ENCODE measurements at regions of chr1 and their contacts with region 1.

Region 1: GRCh38 chr1:30085811-30086770 is 637.3 kb downstream of the MATN1 start:
- DNase-seq: peak; percentile 84
- H3K4me3 ChIP-seq: peak overlapping the region; percentile 20
- H3K27ac ChIP-seq: peak overlapping the region; percentile 44
- H3K4me1 ChIP-seq: peaks cover 54% of the 10 kb centered on the region
- H3K27me3 ChIP-seq: no peaks in the 10 kb centered on the region
- CTCF ChIP-seq: peak; percentile 92

Region 2: GRCh38 chr1:29513357-29513756 is 572.7 kb before region 1 on chr1:
- CTCF ChIA-PET with region 1: interaction called, 3 read pairs
- POLR2A ChIA-PET with region 1: no interaction called
- intact Hi-C with region 1: loop called (anchors 10 kb)
- DNase-seq: peak; percentile 72
- H3K4me3 ChIP-seq: no peak overlapping the region
- H3K27ac ChIP-seq: no peak overlapping the region
- H3K4me1 ChIP-seq: no peaks in the 10 kb centered on the region
- H3K27me3 ChIP-seq: peaks cover 38% of the 10 kb centered on the region
- CTCF ChIP-seq: peak; percentile 65

Region 3: DNA sequence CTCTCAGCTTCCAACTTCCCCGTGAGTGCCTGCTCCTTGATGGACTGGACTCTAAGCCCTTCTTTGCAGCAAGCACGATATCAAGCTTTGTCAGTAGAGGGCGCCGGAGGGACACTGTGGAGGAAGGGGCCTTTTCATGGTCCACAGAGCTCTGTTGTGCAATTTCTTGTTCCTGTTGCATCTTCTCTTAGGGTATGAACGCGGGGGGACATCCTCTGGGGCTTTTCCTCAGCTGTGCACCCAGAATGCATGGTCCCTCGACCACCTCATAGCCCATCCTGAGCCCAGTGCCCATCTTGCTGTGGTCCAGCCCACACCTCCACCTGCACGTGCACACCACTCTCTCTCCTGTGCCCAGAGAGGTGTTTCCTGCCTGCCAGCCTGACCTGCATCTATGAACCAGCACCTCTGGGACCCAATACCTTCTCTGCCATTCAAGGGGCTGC is 293.0 kb before region 1 on chr1:
- CTCF ChIA-PET with region 1: interaction called, 6 read pairs
- POLR2A ChIA-PET with region 1: no interaction called
- intact Hi-C with region 1: loop called (anchors 1 kb)
- DNase-seq: peak; percentile 93
- H3K4me3 ChIP-seq: no peak overlapping the region
- H3K27ac ChIP-seq: peak overlapping the region; percentile 83
- H3K4me1 ChIP-seq: peaks cover 6% of the 10 kb centered on the region
- H3K27me3 ChIP-seq: no peaks in the 10 kb centered on the region
- CTCF ChIP-seq: peak; percentile 90

Region 4: DNA sequence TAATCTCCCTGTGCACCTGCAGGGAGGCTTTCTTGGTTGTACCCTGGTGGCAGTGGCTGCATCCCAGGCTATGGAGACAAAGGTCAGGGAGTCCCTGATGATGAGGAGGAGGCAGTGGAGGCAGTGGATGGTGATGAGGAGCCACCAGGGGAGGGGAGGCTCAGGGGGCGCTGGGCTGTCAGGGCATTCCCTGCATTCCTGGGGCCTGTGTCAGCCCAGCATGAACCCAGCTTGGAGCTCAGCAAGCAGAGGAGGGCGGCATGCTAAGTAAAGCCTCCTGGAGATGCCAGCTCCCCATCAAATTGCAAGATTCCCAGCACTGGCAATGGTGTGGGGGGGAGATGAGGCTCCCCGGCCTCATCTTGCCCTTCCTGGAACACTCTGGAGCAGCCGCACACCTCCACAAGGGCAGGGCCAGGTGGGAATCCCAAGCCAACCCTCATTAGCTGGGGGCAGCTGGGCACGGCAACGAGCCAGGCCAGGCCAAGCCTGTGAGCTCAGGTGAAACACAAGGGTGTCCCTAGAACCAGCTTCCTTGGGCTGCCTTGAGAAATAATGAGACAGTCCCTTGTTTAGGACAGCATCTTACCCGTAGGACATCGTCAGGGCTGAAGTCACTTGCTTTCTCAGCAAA is 167.8 kb after region 1 on chr1:
- CTCF ChIA-PET with region 1: no interaction called
- POLR2A ChIA-PET with region 1: no interaction called
- intact Hi-C with region 1: loop called (anchors 2 kb)
- DNase-seq: peak; percentile 73
- H3K4me3 ChIP-seq: no peak overlapping the region
- H3K27ac ChIP-seq: peak overlapping the region; percentile 100
- H3K4me1 ChIP-seq: peaks cover 94% of the 10 kb centered on the region
- H3K27me3 ChIP-seq: no peaks in the 10 kb centered on the region
- CTCF ChIP-seq: no peak

Region 5: GRCh38 chr1:30707412-30708360 is 621.6 kb after region 1 on chr1:
- CTCF ChIA-PET with region 1: no interaction called
- POLR2A ChIA-PET with region 1: no interaction called
- intact Hi-C with region 1: loop called (anchors 5 kb)
- DNase-seq: peak; percentile 86
- H3K4me3 ChIP-seq: no peak overlapping the region
- H3K27ac ChIP-seq: no peak overlapping the region
- H3K4me1 ChIP-seq: peaks cover 10% of the 10 kb centered on the region
- H3K27me3 ChIP-seq: no peaks in the 10 kb centered on the region
- CTCF ChIP-seq: peak; percentile 90